ENCODE measurements at regions of chr2 and their contacts with region 1.

Region 1: GRCh38 chr2:111883661-111884591 is at the start of gene ANAPC1:
- DNase-seq: peak; percentile 92
- ATAC-seq: peak; percentile 96
- H3K4me3 Mint-ChIP-seq: peak within 1 kb of the TSS; percentile 82
- H3K27ac Mint-ChIP-seq: peak within 1 kb of the TSS; percentile 93
- H3K4me1 Mint-ChIP-seq: peaks cover 18% of the 10 kb centered on the region
- H3K27me3 Mint-ChIP-seq: no peaks in the 10 kb centered on the region
- CTCF ChIP-seq: no peak
- total RNA-seq, gene ANAPC1: 118 to 135 TPM

Region 2: GRCh38 chr2:111897924-111898702 is 14.2 kb after region 1 on chr2 and contains the start of gene MERTK:
- CTCF ChIA-PET with region 1: interaction called, 17 read pairs
- POLR2A ChIA-PET with region 1: interaction called, 4 read pairs
- intact Hi-C with region 1: no loop called
- DNase-seq: peak; percentile 64
- ATAC-seq: peak; percentile 92
- H3K4me3 Mint-ChIP-seq: peak within 1 kb of the TSS; percentile 77
- H3K27ac Mint-ChIP-seq: no peak within 1 kb of the TSS
- H3K4me1 Mint-ChIP-seq: peaks cover 11% of the 10 kb centered on the region
- H3K27me3 Mint-ChIP-seq: peaks cover 45% of the 10 kb centered on the region
- CTCF ChIP-seq: peak; percentile 49
- total RNA-seq, gene MERTK: 0.43 to 0.70 TPM

Region 3: DNA sequence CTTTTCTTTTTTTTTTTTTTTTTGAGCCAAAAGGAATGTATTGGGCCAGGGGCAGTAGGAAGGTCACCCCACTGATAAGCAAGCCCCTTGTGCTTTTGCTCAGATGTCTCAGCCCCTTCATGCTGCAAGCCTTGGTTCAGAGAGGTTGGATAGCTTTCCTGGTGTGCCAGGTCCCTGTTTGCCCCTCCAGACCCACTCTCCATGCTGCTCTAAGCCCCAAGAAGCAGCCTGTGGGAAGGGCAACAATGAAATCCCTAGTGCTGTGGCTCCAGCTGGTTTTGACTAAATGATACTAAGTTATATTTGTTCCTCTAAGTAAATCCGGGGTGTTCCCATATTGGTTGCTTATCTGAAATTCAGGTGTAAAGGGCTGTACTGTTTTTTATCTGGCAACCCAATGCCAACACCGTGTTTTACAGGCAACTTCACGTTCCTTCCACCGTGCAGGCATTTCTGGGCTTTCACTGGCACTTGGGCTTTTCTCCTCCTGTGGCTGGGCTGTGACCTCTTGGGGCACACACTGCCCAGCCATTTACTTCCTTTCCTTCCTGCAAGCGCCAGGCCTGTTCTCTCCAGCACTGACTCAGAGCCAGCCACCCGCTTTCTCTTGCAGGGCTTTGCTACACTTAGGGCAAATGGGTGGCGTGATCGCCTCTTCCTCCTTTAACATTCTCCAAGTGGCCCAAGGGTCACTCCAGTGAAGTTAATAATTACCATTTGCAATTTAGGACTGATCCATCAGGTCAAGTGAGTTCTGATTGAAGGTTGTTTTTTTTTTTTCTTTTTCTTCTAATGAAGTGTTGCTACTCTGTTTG is 36.1 kb after region 1 on chr2:
- CTCF ChIA-PET with region 1: no interaction called
- POLR2A ChIA-PET with region 1: no interaction called
- intact Hi-C with region 1: no loop called
- DNase-seq: no peak
- ATAC-seq: no peak
- H3K4me3 Mint-ChIP-seq: no peak overlapping the region
- H3K27ac Mint-ChIP-seq: no peak overlapping the region
- H3K4me1 Mint-ChIP-seq: no peaks in the 10 kb centered on the region
- H3K27me3 Mint-ChIP-seq: no peaks in the 10 kb centered on the region
- CTCF ChIP-seq: no peak

Region 4: DNA sequence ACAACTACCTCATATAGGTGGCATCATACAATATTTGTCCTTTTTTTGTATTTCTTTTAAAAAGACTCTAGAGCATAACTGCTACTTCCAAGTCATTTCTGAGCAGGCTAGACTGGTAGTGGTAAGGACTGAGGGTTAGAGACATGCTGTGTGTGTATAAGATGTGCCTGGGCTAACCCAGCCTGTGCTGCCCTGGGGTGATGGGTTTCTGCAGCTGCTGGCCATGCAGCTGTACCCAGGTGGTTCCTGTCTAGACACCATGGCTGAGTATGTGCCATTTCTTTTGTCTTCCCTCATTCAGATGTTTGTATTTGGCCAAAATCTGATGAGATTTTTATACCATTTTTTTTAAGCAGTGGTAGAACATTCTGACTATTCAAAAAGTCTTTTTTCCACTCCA is 54.5 kb after region 1 on chr2:
- CTCF ChIA-PET with region 1: no interaction called
- POLR2A ChIA-PET with region 1: no interaction called
- intact Hi-C with region 1: no loop called
- DNase-seq: no peak
- ATAC-seq: no peak
- H3K4me3 Mint-ChIP-seq: no peak overlapping the region
- H3K27ac Mint-ChIP-seq: no peak overlapping the region
- H3K4me1 Mint-ChIP-seq: no peaks in the 10 kb centered on the region
- H3K27me3 Mint-ChIP-seq: peaks cover 12% of the 10 kb centered on the region
- CTCF ChIP-seq: no peak

Region 5: DNA sequence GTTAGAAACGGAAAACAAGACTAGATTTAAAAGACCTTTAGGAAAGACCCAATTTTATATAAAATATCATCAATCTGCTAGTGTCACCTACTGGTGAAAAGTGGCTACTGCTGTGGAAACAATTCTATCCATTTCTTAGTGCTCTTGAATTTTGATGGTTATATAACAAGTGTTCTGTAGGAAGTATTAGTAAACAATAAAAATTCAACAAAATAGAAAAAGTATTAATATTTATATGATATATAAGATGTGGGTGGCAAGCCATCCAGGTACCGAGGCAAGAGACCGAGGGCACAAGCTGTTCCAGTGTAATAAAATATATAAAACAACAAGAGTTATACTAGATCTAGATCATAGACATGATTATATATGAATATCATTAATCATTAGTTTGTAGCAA is 165.0 kb after region 1 on chr2:
- CTCF ChIA-PET with region 1: interaction called, 29 read pairs
- POLR2A ChIA-PET with region 1: no interaction called
- intact Hi-C with region 1: loop called (anchors 2 kb)
- DNase-seq: peak; percentile 40
- ATAC-seq: peak; percentile 83
- H3K4me3 Mint-ChIP-seq: no peak overlapping the region
- H3K27ac Mint-ChIP-seq: no peak overlapping the region
- H3K4me1 Mint-ChIP-seq: peaks cover 6% of the 10 kb centered on the region
- H3K27me3 Mint-ChIP-seq: no peaks in the 10 kb centered on the region
- CTCF ChIP-seq: peak; percentile 82

Region 6: DNA sequence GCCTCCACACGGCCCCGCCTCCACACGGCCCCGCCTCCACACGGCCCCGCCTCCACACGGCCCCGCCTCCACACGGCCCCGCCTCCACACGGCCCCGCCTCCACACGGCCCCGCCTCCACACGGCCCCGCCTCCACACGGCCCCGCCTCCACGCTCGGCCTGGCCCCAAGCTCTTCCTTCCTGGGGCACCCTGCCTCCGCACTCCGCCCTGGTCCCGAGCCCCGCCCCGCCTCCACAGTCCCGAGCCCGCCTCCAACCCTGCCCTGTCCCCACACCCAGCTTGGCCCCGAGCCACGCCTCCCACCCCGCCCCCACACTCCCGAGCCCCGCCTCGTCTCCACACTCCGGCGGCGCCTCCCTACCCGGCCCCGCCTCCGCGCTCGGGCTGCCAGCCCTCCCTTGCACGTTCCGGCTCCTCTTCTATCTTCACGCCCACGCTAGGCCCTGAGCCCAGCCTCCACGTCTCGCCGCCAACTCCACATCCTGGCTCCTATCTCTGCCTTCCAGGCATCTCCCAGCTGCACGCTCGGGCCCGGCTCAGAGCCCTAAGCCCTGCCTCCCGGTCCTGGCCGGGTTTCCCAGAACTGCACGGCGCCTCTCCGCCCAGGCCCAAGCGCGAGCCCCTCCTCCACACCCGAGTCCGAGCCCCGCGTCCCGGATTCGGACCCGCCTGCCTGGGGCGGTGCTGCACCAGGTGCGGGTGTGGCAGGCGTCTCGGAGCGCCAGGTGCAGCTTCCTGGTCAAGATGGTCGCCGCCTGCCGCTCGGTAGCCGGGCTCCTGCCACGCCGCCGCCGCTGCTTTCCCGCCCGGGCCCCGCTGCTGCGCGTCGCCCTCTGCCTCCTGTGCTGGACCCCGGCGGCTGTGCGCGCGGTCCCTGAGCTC is 171.2 kb after region 1 on chr2 and contains the start of gene TMEM87B:
- CTCF ChIA-PET with region 1: interaction called, 15 read pairs
- POLR2A ChIA-PET with region 1: interaction called, 4 read pairs
- intact Hi-C with region 1: no loop called
- DNase-seq: peak; percentile 98
- ATAC-seq: peak; percentile 76
- H3K4me3 Mint-ChIP-seq: peak within 1 kb of the TSS; percentile 81
- H3K27ac Mint-ChIP-seq: peak within 1 kb of the TSS; percentile 96
- H3K4me1 Mint-ChIP-seq: peaks cover 29% of the 10 kb centered on the region
- H3K27me3 Mint-ChIP-seq: no peaks in the 10 kb centered on the region
- CTCF ChIP-seq: no peak
- total RNA-seq, gene TMEM87B: 11.4 to 12.2 TPM